OCI-LY7 (cell line): ENCODE measurements at regions of chr2 and their contacts with region 1.

Region 1: GRCh38 chr2:47653902-47654789 is 128.8 kb upstream of the MSH6 start:
- DNase-seq: peak; percentile 70
- H3K4me3 ChIP-seq: peak overlapping the region; percentile 71
- H3K27ac ChIP-seq: peak overlapping the region; percentile 97
- H3K4me1 ChIP-seq: peaks cover 78% of the 10 kb centered on the region
- CTCF ChIP-seq: peak; percentile 73

Region 2: DNA sequence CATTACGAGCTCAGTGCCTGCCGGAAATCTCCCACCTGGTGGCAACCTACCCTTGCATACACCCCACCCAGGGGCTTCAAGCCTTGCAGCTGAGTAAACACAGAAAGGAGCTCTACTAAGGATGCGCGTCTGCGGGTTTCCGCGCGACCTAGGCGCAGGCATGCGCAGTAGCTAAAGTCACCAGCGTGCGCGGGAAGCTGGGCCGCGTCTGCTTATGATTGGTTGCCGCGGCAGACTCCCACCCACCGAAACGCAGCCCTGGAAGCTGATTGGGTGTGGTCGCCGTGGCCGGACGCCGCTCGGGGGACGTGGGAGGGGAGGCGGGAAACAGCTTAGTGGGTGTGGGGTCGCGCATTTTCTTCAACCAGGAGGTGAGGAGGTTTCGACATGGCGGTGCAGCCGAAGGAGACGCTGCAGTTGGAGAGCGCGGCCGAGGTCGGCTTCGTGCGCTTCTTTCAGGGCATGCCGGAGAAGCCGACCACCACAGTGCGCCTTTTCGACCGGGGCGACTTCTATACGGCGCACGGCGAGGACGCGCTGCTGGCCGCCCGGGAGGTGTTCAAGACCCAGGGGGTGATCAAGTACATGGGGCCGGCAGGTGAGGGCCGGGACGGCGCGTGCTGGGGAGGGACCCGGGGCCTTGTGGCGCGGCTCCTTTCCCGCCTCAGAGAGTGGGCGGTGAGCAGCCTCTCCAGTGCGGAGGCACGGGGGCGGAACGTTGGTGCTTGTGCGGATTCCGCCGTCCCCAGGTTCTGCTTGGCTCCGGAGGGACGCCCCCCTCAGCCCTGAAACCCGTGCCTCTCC is 251.1 kb before region 1 on chr2 and contains the start of gene MSH2:
- CTCF ChIA-PET with region 1: interaction called, 3 read pairs
- POLR2A ChIA-PET with region 1: interaction called, 3 read pairs
- intact Hi-C with region 1: loop called (anchors 5 kb)
- DNase-seq: peak; percentile 98
- H3K4me3 ChIP-seq: peak within 1 kb of the TSS; percentile 86
- H3K27ac ChIP-seq: peak within 1 kb of the TSS; percentile 68
- H3K4me1 ChIP-seq: peaks cover 20% of the 10 kb centered on the region
- CTCF ChIP-seq: no peak; the same call in 1 of the 2 replicates
- total RNA-seq, gene MSH2: 96.8 and 107 TPM in 2 replicates

Region 3: DNA sequence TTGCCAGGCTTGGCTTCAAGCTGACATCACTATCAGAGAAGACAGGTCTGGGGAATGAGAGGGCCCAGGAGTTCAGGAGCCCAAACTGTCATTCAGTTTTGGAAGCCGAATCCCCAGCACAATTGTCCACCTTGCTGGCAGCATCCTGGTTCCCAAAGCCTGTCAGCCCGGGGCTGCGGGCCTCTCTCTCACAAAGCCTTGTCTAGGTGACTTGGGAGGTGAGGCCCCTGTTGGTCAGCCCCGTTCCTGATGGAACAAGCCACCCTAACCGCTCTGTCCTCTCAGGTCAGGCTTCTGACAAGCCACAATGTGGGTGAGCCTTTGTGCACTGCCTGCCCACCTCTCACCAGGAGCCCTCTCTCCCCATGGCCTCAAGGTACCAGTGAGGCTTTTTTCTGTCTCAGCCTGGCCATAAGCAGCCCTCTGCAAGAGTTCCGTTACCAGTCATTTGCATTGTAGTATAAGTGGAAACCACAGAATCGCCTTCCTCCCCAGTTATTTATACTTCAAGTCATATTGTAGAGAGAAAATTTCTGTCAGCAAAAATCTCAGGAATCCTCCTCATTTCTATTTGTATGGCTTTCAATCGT is 150.6 kb before region 1 on chr2:
- CTCF ChIA-PET with region 1: no interaction called
- POLR2A ChIA-PET with region 1: no interaction called
- intact Hi-C with region 1: loop called (anchors 5 kb)
- DNase-seq: peak; percentile 81
- H3K4me3 ChIP-seq: peak overlapping the region; percentile 43
- H3K27ac ChIP-seq: peak overlapping the region; percentile 92
- H3K4me1 ChIP-seq: peaks cover 37% of the 10 kb centered on the region
- CTCF ChIP-seq: no peak

Region 4: DNA sequence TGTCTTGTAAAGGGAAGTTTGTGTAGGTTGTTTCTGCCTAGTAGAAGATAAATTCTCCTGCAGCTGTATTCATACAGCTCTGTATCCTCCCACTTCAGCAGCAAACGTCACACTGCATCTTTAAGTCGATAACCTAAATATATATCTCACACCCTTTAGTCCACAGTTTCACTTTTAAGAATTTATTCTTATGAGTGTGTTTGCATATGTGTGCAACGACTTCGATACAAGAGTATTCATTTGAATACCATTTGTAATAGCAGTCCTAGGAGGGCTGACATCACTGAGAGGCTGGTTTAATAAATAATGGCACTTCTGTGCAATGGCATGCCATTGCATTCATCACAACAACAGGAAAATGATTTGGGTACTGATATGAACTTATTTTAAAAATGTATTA is 65.0 kb after region 1 on chr2:
- CTCF ChIA-PET with region 1: interaction called, 5 read pairs
- POLR2A ChIA-PET with region 1: interaction called, 55 read pairs
- intact Hi-C with region 1: loop called (anchors 1 kb)
- DNase-seq: peak; percentile 83
- H3K4me3 ChIP-seq: peak overlapping the region; percentile 33
- H3K27ac ChIP-seq: peak overlapping the region; percentile 100
- H3K4me1 ChIP-seq: peaks cover 100% of the 10 kb centered on the region
- CTCF ChIP-seq: no peak

Region 5: GRCh38 chr2:47767880-47768609 is 113.9 kb after region 1 on chr2:
- CTCF ChIA-PET with region 1: no interaction called
- POLR2A ChIA-PET with region 1: interaction called, 8 read pairs
- intact Hi-C with region 1: loop called (anchors 1 kb)
- DNase-seq: peak; percentile 75
- H3K4me3 ChIP-seq: no peak overlapping the region
- H3K27ac ChIP-seq: peak overlapping the region; percentile 65
- H3K4me1 ChIP-seq: peaks cover 65% of the 10 kb centered on the region
- CTCF ChIP-seq: peak; percentile 99

Region 6: GRCh38 chr2:47906157-47907038 is 252.3 kb after region 1 on chr2 and contains the start of gene FBXO11:
- CTCF ChIA-PET with region 1: no interaction called
- POLR2A ChIA-PET with region 1: no interaction called
- intact Hi-C with region 1: loop called (anchors 2 kb)
- DNase-seq: peak; percentile 99
- H3K4me3 ChIP-seq: peak within 1 kb of the TSS; percentile 93
- H3K27ac ChIP-seq: peak within 1 kb of the TSS; percentile 95
- H3K4me1 ChIP-seq: peaks cover 31% of the 10 kb centered on the region
- CTCF ChIP-seq: no peak; the same call in 1 of the 2 replicates
- total RNA-seq, gene FBXO11: 24.7 and 31.9 TPM in 2 replicates

Region 7: DNA sequence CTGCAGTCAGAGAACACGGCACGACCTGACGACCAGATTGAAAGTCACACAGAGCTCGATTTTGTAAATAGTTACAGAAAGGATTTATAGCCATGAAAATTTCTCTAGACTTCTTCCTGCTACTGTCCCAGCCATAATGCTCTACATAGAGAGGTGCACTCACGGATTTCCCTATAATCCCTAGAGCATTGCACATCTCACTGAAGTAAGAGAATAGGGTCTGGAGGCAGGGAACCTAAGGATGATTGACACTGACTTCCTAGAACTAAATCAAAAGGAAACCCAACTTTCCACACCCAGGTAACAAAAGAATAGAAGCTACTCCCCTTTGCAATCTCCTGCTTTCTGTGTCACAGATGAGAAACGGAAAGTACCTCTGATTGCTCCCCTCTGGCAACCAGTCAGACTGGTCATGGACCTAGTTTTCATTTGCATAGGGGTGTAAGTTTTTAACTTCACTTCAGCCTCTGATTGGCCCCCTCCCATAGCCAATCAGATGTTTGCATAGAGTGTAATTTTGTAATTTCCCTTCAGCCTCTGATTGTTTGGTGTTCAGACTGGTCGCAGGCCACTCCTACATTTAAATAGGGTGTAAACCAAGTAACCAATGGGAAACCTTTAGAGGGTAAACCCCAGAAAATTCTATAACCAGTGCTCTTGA is 310.8 kb after region 1 on chr2:
- CTCF ChIA-PET with region 1: no interaction called
- POLR2A ChIA-PET with region 1: no interaction called
- intact Hi-C with region 1: no loop called
- DNase-seq: no peak
- H3K4me3 ChIP-seq: no peak overlapping the region
- H3K27ac ChIP-seq: no peak overlapping the region
- H3K4me1 ChIP-seq: no peaks in the 10 kb centered on the region
- CTCF ChIP-seq: no peak